ENCODE measurements at regions of chr3 and their contacts with region 1.

Region 1: GRCh38 chr3:98593046-98593936 is at the start of gene CPOX:
- DNase-seq: peak; percentile 93 to 96 (median 96)
- ATAC-seq: peak; percentile 99
- H3K4me3 ChIP-seq: peak within 1 kb of the TSS; percentile 79
- H3K27ac ChIP-seq: peak within 1 kb of the TSS; percentile 87
- H3K4me1 ChIP-seq: no peaks in the 10 kb centered on the region
- H3K27me3 ChIP-seq: no peaks in the 10 kb centered on the region
- total RNA-seq, gene CPOX: 7.8 to 13.4 (median 11.5) TPM

Region 2: DNA sequence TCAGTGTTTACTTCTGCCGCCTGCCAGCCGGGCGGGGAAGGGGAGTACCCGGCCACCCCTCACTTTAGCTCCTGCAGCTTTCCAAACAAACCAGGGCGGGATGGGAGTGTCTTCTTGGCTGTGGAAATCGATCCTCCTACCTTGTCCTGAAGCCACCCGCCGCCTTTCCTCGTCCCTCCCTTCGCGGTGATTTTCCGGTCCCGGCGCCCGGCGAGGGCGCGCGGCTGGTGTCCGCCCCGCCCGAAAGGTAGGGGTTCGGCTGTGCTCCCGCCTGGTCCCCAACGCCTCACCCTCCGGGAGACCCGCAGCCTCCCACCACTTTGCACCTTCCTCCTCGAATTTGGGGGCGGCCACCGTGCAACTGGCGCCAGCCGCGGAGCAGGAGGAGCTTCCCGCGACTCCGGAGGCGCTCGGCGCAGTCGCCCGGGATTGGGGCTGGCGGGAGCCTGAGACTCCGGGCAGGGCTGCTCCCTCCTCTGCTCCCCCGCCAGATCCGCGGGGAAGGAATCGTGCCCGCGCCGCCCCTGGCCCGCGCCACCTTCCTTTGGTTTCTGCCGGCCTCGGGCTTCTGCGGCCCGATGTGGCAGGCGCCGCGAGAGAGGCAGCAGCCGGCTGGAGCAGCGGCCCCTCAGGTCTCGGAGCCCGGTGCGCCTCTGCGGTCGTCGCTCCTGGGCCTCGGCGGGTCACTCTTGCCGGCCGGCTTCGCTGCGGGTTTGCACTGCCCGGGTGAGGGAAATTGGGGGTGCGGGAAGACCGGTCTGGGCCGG is 139.2 kb after region 1 on chr3:
- intact Hi-C with region 1: loop called in 1 of 4 experiments (anchors 10 kb)
- DNase-seq: peak; percentile 60 to 82 (median 80)
- ATAC-seq: peak; percentile 89
- H3K4me3 ChIP-seq: peak overlapping the region; percentile 77
- H3K27ac ChIP-seq: peak overlapping the region; percentile 50
- H3K4me1 ChIP-seq: peaks cover 4% of the 10 kb centered on the region
- H3K27me3 ChIP-seq: no peaks in the 10 kb centered on the region

Region 3: GRCh38 chr3:98817547-98818041 is 224.3 kb after region 1 on chr3:
- intact Hi-C with region 1: loop called in 1 of 4 experiments (anchors 5 kb)
- DNase-seq: no peak
- ATAC-seq: peak; percentile 67 to 77
- H3K4me3 ChIP-seq: no peak overlapping the region
- H3K27ac ChIP-seq: no peak overlapping the region
- H3K4me1 ChIP-seq: no peaks in the 10 kb centered on the region
- H3K27me3 ChIP-seq: no peaks in the 10 kb centered on the region

Region 4: DNA sequence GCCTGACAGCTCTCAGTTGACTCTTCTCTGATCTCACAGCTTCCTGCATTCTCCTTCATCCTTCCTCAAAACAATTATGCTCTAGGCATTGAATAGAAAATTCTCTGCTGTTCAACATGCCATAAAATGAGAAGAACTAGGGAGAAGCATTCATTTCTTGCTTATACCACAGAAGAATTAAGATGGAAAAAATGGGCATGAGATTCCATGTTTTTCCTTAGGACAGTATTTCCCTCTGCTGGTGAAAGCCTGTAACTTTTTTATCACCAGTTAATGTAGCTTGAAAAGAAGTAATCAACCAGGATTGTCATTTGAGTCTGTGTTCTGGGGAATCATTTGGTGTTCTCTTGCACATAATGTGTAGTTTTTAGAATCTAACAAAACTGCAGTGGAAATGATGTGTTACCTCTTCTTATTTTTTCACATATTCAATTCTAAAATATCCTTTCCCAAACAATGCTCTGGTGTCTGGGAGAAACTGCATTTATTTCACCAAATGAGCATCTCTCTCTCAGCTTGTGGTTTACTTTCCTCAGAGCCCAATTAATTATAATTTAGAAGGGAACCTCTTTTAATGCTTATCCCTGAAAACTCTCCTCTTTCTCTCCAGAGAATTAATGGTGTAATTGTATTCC is 401.0 kb after region 1 on chr3:
- intact Hi-C with region 1: loop called in 1 of 4 experiments (anchors 10 kb)
- DNase-seq: no peak
- ATAC-seq: peak in 1 of 2 donors; percentile 34
- H3K4me3 ChIP-seq: no peak overlapping the region
- H3K27ac ChIP-seq: no peak overlapping the region
- H3K4me1 ChIP-seq: no peaks in the 10 kb centered on the region
- H3K27me3 ChIP-seq: no peaks in the 10 kb centered on the region